Right ventricle myocardium superior (tissue), 1 donor: ENCODE measurements at regions of chr1 and their contacts with region 1.

Region 1: GRCh38 chr1:210311726-210312493 is 16.8 kb upstream of the HHAT start:
- DNase-seq: no peak
- ATAC-seq: peak; percentile 83

Region 2: DNA sequence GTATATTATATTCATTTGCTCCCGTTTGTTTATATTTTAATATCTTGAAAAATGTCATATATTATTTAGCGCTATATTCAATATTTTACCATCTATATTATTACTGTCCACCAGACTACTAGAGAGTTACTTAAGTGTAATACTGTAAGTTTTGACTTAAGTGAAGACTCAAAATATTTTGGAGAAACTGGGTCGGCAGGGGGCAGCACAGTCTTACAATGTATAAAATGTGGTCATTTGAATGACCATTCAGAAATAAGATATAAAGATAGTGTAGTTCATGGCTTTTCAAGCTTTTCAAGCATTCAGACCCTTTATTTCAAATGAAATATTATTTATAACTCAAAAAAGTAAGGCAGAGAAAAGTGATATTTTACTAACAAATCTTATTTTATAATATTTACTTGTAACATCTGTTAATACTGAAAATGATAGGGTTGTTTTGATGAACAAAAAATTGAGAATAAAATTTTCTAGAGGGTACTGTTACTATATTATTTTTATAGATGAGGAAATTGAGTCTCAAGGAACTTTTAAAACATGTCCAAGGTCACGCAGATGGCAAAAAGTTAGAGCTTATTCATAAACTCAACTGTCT is 168.3 kb before region 1 on chr1:
- intact Hi-C with region 1: loop called (anchors 2 kb)
- DNase-seq: peak; percentile 85
- ATAC-seq: peak; percentile 43

Region 3: GRCh38 chr1:210250998-210251679 is 60.8 kb before region 1 on chr1:
- intact Hi-C with region 1: no loop called
- DNase-seq: peak; percentile 63
- ATAC-seq: peak; percentile 65